OCI-LY7 (cell line): ENCODE measurements at regions of chr1 and their contacts with region 1.

Region 1: DNA sequence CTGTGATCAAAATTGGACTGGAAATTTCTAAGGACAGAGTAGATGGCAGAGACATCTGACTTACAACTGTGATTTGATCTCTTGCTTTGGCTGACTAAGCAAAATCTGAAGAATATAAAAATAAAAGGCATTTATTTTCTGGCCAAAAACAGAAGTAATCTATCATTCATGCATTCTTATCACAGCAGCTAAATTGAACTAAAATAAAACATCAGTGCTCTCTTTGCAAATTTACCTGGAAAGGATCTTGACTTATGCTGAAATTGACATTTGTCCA is 81.4 kb upstream of the ZNF678 start:
- DNase-seq: no peak
- H3K4me3 ChIP-seq: no peak overlapping the region
- H3K27ac ChIP-seq: no peak overlapping the region
- H3K4me1 ChIP-seq: no peaks in the 10 kb centered on the region
- CTCF ChIP-seq: no peak

Region 2: DNA sequence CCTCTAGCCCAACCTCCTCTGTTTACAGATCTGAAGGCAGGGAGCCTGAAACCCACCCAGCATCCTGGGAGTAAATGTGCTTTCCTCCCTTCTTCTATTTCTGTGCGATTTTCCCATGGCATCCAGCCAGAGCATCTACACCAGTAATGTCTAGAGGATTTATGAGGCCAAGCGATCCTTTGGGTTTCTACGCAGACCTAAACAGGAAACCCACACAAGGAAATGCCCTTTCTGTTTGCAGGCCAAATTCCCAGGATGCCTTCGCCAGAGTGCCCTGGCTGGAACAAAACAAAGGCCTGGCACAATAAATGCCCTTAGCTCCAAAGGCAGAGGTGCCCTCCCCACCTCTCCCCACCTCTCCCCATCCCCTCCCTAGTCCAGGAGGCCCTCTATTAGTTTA is 53.2 kb before region 1 on chr1:
- CTCF ChIA-PET with region 1: no interaction called
- POLR2A ChIA-PET with region 1: no interaction called
- intact Hi-C with region 1: no loop called
- DNase-seq: no peak
- H3K4me3 ChIP-seq: no peak overlapping the region
- H3K27ac ChIP-seq: no peak overlapping the region
- H3K4me1 ChIP-seq: no peaks in the 10 kb centered on the region
- CTCF ChIP-seq: no peak

Region 3: GRCh38 chr1:227728059-227728891 is 246.3 kb after region 1 on chr1:
- CTCF ChIA-PET with region 1: no interaction called
- POLR2A ChIA-PET with region 1: no interaction called
- intact Hi-C with region 1: loop called (anchors 5 kb)
- DNase-seq: peak; percentile 79
- H3K4me3 ChIP-seq: peak overlapping the region; percentile 69
- H3K27ac ChIP-seq: peak overlapping the region; percentile 10
- H3K4me1 ChIP-seq: peaks cover 31% of the 10 kb centered on the region
- CTCF ChIP-seq: no peak

Region 4: GRCh38 chr1:227958617-227959347 is 476.8 kb after region 1 on chr1:
- CTCF ChIA-PET with region 1: no interaction called
- POLR2A ChIA-PET with region 1: no interaction called
- intact Hi-C with region 1: loop called (anchors 5 kb)
- DNase-seq: no peak
- H3K4me3 ChIP-seq: no peak overlapping the region
- H3K27ac ChIP-seq: no peak overlapping the region
- H3K4me1 ChIP-seq: no peaks in the 10 kb centered on the region
- CTCF ChIP-seq: no peak